ENCODE measurements at regions of chr13 and their contacts with region 1.

Region 1: DNA sequence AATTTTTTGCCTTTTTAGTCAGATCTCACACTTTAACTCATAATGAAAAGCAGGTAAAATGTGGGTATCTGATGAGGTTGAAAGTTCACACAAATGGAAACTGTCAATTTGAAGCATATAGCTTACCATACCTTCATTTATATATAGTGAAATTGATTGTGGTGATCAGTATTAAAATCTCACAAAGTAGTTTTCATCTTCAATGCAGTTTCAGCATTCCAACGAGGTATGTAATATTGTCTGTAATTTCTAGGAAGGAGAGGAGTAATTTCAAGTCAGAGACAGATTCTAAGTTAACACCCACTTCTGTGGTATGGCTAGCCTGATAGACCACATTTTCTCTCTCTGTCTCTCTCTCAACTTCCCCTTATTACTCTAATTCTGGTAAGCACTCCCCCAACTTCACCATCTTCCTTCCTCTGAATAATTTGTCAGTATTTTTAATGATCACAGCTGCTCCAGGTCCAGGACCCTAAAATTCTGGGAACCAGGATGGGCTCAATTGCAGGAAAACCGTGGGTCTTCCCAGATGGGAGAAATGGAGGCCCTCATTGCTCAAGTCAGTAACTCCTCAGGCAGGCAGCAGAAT is 455.7 kb downstream of the FGF9 start:
- DNase-seq: peak in 2 of 9 experiments; percentile 17 to 39
- ATAC-seq: no peak
- H3K4me3 ChIP-seq: no peak overlapping the region
- H3K4me3 Mint-ChIP-seq: no peak overlapping the region
- H3K27ac ChIP-seq: no peak overlapping the region
- H3K27ac Mint-ChIP-seq: no peak overlapping the region
- H3K4me1 ChIP-seq: peaks cover 9% of the 10 kb centered on the region
- H3K4me1 Mint-ChIP-seq: peaks cover 21% of the 10 kb centered on the region
- H3K27me3 ChIP-seq: no peaks in the 10 kb centered on the region
- H3K27me3 Mint-ChIP-seq: no peaks in the 10 kb centered on the region
- CTCF ChIP-seq: no peak

Region 2: GRCh38 chr13:22141716-22142115 is 15.2 kb after region 1 on chr13:
- CTCF ChIA-PET with region 1: interaction called, 4 read pairs
- POLR2A ChIA-PET with region 1: no interaction called
- intact Hi-C with region 1: loop called in 1 of 2 experiments (anchors 2 kb)
- DNase-seq: no peak
- ATAC-seq: no peak
- H3K4me3 ChIP-seq: no peak overlapping the region
- H3K4me3 Mint-ChIP-seq: no peak overlapping the region
- H3K27ac ChIP-seq: no peak overlapping the region
- H3K27ac Mint-ChIP-seq: no peak overlapping the region
- H3K4me1 ChIP-seq: no peaks in the 10 kb centered on the region
- H3K4me1 Mint-ChIP-seq: peaks cover 4% of the 10 kb centered on the region
- H3K27me3 ChIP-seq: no peaks in the 10 kb centered on the region
- H3K27me3 Mint-ChIP-seq: no peaks in the 10 kb centered on the region
- CTCF ChIP-seq: no peak